ENCODE measurements at regions of chr16 and their contacts with region 1.

Region 1: GRCh38 chr16:24499193-24499814 is 40.1 kb upstream of the RBBP6 start:
- DNase-seq: peak; percentile 55
- ATAC-seq: no peak
- H3K4me3 Mint-ChIP-seq: no peak overlapping the region
- H3K27ac Mint-ChIP-seq: no peak overlapping the region
- H3K4me1 Mint-ChIP-seq: no peaks in the 10 kb centered on the region
- H3K27me3 Mint-ChIP-seq: peaks cover 12% of the 10 kb centered on the region

Region 2: GRCh38 chr16:24041826-24042631 is 457.3 kb before region 1 on chr16:
- CTCF ChIA-PET with region 1: interaction called, 29 read pairs
- POLR2A ChIA-PET with region 1: interaction called, 3 read pairs
- intact Hi-C with region 1: loop called (anchors 1 kb)
- DNase-seq: peak; percentile 90
- ATAC-seq: peak; percentile 93
- H3K4me3 Mint-ChIP-seq: no peak overlapping the region
- H3K27ac Mint-ChIP-seq: no peak overlapping the region
- H3K4me1 Mint-ChIP-seq: peaks cover 5% of the 10 kb centered on the region
- H3K27me3 Mint-ChIP-seq: no peaks in the 10 kb centered on the region

Region 3: GRCh38 chr16:24626256-24626655 is 127.0 kb after region 1 on chr16:
- CTCF ChIA-PET with region 1: no interaction called
- POLR2A ChIA-PET with region 1: no interaction called
- intact Hi-C with region 1: no loop called
- DNase-seq: no peak
- ATAC-seq: no peak
- H3K4me3 Mint-ChIP-seq: no peak overlapping the region
- H3K27ac Mint-ChIP-seq: no peak overlapping the region
- H3K4me1 Mint-ChIP-seq: no peaks in the 10 kb centered on the region
- H3K27me3 Mint-ChIP-seq: peaks cover 3% of the 10 kb centered on the region

Region 4: GRCh38 chr16:24645739-24646645 is 146.7 kb after region 1 on chr16:
- CTCF ChIA-PET with region 1: no interaction called
- POLR2A ChIA-PET with region 1: no interaction called
- intact Hi-C with region 1: no loop called
- DNase-seq: no peak
- ATAC-seq: no peak
- H3K4me3 Mint-ChIP-seq: no peak overlapping the region
- H3K27ac Mint-ChIP-seq: no peak overlapping the region
- H3K4me1 Mint-ChIP-seq: no peaks in the 10 kb centered on the region
- H3K27me3 Mint-ChIP-seq: peaks cover 13% of the 10 kb centered on the region